ENCODE measurements at regions of chr1 and their contacts with region 1.

Region 1: GRCh38 chr1:89843281-89844121 is 22.7 kb downstream of the LRRC8D start:
- DNase-seq: no peak
- H3K4me3 ChIP-seq: peak overlapping the region; percentile 83
- CTCF ChIP-seq: peak; percentile 64

Region 2: DNA sequence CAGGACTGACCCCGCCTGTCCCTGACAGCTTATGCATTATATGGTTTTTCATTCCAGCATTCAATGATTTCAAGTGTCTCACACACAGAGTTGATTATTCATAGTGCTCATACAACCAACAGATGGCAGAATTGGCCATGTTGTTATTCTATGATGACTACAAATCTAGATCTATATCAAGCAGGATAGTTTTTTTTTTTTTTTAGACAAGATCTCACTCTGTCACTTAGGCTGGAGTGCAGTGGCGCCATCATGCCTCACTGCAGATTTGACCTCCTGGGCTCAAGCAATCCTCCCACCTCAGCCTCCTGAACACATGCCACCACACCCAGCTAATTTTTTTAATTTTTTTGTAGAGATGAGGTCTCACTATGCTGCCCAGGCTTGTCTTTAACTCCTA is 62.8 kb before region 1 on chr1:
- CTCF ChIA-PET with region 1: interaction called, 16 read pairs
- POLR2A ChIA-PET with region 1: no interaction called
- DNase-seq: peak; percentile 10
- H3K4me3 ChIP-seq: no peak overlapping the region
- CTCF ChIP-seq: peak; percentile 42

Region 3: GRCh38 chr1:89820422-89821321 is 22.8 kb before region 1 on chr1 and contains the start of gene LRRC8D:
- CTCF ChIA-PET with region 1: interaction called, 20 read pairs
- POLR2A ChIA-PET with region 1: interaction called, 5 read pairs
- DNase-seq: no peak
- H3K4me3 ChIP-seq: peak within 1 kb of the TSS; percentile 69
- CTCF ChIP-seq: no peak

Region 4: DNA sequence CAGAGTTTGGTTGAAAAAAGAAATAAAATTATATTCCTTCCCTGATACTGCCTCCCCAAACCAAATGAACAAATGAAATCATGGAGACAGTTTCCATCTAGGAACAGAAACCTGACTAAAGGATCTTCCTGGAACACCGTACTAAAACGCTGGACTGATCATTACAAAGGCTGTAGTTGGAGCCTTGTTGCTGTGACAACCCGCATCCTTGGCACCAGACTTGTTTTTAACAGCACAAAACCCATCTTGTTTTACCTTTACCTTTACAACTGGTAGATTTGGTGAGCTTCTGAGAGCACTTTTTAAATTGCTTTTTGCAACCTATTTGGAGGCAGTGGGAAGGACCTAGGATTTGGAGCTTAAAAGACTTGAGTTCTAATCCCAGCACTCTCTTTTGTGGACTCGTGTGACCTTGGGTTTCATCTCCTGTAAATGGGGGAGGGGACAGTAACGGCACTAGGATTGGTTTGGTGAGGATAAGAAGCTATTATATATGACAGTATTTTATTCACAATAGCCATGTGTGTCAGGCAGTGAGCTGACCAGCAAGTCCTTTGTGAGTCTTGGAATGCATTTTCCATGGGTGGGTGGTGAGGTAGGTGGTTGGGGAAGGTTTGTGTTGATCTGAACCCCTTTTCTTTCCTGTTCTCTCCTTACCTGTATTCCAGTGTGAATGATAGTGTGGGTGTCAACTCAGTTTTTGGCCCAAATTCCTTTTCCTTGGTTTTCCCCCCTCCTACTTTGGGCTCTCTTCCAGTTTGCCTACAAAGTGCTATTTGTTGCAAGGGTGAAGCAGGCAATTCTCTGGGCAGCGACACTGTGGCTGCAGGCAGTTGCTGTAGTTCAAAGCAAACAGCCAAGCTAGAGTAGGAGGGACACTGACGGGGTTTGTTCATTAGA is 10.1 kb before region 1 on chr1:
- CTCF ChIA-PET with region 1: interaction called, 19 read pairs
- POLR2A ChIA-PET with region 1: no interaction called
- DNase-seq: no peak
- H3K4me3 ChIP-seq: no peak overlapping the region
- CTCF ChIP-seq: no peak

Region 5: GRCh38 chr1:89855413-89856123 is 12.1 kb after region 1 on chr1:
- CTCF ChIA-PET with region 1: interaction called, 13 read pairs
- POLR2A ChIA-PET with region 1: interaction called, 3 read pairs
- DNase-seq: no peak
- H3K4me3 ChIP-seq: no peak overlapping the region
- CTCF ChIP-seq: no peak

Region 6: GRCh38 chr1:89974701-89975470 is 131.4 kb after region 1 on chr1:
- CTCF ChIA-PET with region 1: interaction called, 14 read pairs
- POLR2A ChIA-PET with region 1: interaction called, 4 read pairs
- DNase-seq: no peak
- H3K4me3 ChIP-seq: no peak overlapping the region
- CTCF ChIP-seq: no peak

Region 7: DNA sequence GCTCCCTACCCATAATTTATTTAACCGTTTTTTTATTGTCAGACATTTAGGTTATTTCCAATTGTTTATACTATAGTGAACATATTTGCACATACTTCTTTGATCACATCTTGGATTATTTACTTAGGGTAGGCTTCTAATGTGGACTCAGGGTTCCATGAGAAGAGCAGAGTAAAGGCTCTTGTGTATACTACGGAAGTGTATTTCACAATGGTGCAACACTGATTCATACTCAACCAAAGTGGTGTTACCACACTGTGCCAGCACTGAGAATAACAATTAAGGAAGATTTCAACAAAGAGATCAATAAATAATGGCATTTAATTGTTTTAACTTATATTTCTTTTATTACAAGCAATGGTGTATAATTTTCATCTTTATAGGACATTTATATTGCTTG is 402.6 kb after region 1 on chr1:
- CTCF ChIA-PET with region 1: no interaction called
- POLR2A ChIA-PET with region 1: no interaction called
- DNase-seq: no peak
- H3K4me3 ChIP-seq: no peak overlapping the region
- CTCF ChIP-seq: no peak

Measured in AG04449 (cell line).